ENCODE measurements at regions of chr9 and their contacts with region 1.

Region 1: DNA sequence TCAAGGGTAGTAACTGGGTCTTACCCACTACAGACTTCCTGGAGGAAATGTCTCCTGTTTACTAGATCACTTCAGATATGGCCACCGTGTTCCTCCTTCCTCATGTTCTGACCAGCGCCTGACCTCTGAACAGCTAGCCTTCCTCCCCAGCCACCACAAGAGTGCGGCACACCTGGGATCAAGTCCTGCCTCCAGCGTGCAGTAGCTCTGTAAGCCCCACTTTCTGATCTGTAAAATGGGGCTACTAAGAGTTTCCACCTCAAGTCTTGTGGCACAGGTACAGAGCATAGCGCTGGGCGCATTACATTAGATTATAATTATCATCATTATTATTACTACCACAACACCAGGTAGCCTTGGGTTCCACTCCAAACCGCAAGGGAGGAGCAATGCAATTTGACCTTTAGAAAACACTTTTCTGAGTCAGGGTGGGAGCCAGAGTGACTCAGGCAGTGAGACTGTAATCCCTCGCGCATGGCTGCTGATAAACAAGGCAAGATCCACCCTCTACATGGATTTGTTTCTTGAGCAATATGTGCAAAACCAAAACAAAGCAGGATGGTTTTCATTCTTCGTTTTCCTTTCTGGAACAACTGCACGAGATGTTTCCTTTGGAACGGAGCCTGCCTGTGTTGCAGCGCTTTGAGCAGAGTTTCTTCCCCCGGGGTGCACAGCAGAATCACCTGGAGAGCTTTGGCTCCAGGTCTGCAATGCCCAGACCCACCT is 65.0 kb upstream of the ANGPTL2 start:
- DNase-seq: peak; percentile 97
- H3K4me3 ChIP-seq: no peak overlapping the region
- H3K27ac ChIP-seq: peak overlapping the region; percentile 99
- H3K27me3 ChIP-seq: no peaks in the 10 kb centered on the region
- CTCF ChIP-seq: no peak

Region 2: GRCh38 chr9:127122176-127123063 is 65.0 kb before region 1 on chr9 and contains the start of gene ANGPTL2:
- CTCF ChIA-PET with region 1: no interaction called
- POLR2A ChIA-PET with region 1: interaction called, 45 read pairs
- DNase-seq: peak; percentile 94
- H3K4me3 ChIP-seq: peak within 1 kb of the TSS; percentile 94
- H3K27ac ChIP-seq: peak within 1 kb of the TSS; percentile 91
- H3K27me3 ChIP-seq: no peaks in the 10 kb centered on the region
- CTCF ChIP-seq: peak; percentile 1; the same call in 1 of the 2 replicates
- polyA plus RNA-seq, gene ANGPTL2: 107 and 108 TPM in 2 replicates

Region 3: DNA sequence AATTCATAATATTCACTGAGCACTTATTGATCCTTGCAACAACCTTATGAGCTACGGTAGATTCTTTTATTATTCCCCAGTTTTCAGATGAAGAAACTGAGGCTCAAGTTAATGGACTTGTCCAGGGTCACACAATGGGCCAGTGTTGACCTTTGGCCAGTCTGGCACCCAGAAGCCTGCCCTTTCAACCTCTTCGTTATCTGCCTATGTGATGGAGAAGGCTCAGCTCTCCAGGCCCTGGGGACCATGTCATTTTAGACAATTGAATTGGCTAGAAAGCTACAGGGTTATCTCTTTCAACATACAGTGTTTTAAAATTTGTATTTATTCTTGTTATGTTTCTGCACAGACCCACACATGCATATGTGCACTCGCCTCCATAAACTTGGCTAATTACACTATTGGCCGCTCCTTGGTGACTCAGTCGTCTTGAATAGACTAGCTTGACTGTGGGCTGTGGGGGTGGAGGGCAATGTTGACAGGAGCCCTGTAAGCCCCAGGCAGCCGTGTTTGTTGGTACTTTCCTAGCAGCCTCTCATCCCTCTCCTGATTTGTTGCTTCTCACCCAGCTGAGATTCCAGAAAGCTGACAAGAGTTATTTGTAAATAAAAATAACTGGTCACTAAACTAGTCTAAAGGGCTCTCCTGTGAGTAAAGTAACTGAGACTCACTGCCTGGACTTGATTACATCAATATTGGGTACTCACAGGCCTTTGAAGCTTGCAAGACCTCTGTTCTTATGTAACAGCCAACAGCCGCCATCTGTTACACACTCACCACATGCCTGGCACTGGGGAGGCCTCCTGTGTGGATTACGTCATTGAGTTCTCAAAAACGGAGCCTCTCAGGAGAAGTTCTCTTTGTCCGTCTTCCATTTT is 56.5 kb before region 1 on chr9:
- CTCF ChIA-PET with region 1: no interaction called
- POLR2A ChIA-PET with region 1: interaction called, 30 read pairs
- DNase-seq: peak; percentile 88
- H3K4me3 ChIP-seq: no peak overlapping the region
- H3K27ac ChIP-seq: peak overlapping the region; percentile 96
- H3K27me3 ChIP-seq: no peaks in the 10 kb centered on the region
- CTCF ChIP-seq: no peak

Region 4: GRCh38 chr9:127154390-127155191 is 32.8 kb before region 1 on chr9:
- CTCF ChIA-PET with region 1: no interaction called
- POLR2A ChIA-PET with region 1: no interaction called
- DNase-seq: no peak
- H3K4me3 ChIP-seq: no peak overlapping the region
- H3K27ac ChIP-seq: no peak overlapping the region
- H3K27me3 ChIP-seq: no peaks in the 10 kb centered on the region
- CTCF ChIP-seq: no peak

Region 5: DNA sequence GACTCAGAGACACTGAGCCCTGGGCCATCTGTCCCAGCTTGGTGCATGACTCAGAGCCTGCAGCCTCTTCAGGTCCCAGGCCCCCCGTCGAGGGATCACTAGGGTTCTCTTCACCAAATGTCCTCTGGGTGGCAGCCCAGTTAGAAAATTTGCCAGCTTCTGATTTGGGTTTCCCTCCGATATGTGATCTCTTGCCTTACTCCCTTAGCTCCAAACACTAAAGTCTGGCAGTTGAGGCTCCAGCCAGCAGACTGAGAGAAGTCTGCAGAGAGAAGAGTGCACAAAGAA is 17.7 kb after region 1 on chr9:
- CTCF ChIA-PET with region 1: no interaction called
- POLR2A ChIA-PET with region 1: no interaction called
- DNase-seq: no peak
- H3K4me3 ChIP-seq: no peak overlapping the region
- H3K27ac ChIP-seq: no peak overlapping the region
- H3K27me3 ChIP-seq: peaks cover 23% of the 10 kb centered on the region
- CTCF ChIP-seq: peak; percentile 46

Region 6: DNA sequence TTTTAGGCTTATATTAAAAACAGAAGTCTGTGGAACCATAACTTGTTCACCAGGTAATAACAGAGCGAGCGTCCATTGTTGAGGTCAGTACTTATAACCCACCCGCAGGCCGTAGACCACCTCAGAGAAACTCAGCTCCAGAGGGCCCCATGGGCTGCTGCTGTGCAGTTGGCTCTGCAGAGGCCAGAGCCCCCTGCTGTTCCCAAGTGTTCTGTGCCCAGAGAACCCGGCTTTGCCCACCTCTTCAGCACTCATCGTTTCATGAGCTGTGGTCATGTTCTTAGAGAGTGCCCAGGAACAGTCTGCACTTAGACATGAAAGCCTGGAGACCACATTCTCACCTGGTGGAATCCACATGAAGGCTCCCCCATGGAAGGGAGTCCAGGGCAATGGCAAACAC is 159.2 kb after region 1 on chr9:
- CTCF ChIA-PET with region 1: no interaction called
- POLR2A ChIA-PET with region 1: no interaction called
- DNase-seq: no peak
- H3K4me3 ChIP-seq: no peak overlapping the region
- H3K27ac ChIP-seq: no peak overlapping the region
- H3K27me3 ChIP-seq: no peaks in the 10 kb centered on the region
- CTCF ChIP-seq: peak; percentile 33

Measured in AG04450 (cell line).